MCF 10A (cell line): ENCODE measurements at regions of chr20 and their contacts with region 1.

Region 1: GRCh38 chr20:62616728-62617621 is 25.3 kb upstream of the SLCO4A1 start:
- DNase-seq: peak; percentile 75
- H3K4me3 Mint-ChIP-seq: peak overlapping the region; percentile 3
- H3K27ac Mint-ChIP-seq: no peak overlapping the region
- H3K4me1 Mint-ChIP-seq: peaks cover 2% of the 10 kb centered on the region
- H3K27me3 Mint-ChIP-seq: no peaks in the 10 kb centered on the region
- CTCF ChIP-seq: peak; percentile 98

Region 2: DNA sequence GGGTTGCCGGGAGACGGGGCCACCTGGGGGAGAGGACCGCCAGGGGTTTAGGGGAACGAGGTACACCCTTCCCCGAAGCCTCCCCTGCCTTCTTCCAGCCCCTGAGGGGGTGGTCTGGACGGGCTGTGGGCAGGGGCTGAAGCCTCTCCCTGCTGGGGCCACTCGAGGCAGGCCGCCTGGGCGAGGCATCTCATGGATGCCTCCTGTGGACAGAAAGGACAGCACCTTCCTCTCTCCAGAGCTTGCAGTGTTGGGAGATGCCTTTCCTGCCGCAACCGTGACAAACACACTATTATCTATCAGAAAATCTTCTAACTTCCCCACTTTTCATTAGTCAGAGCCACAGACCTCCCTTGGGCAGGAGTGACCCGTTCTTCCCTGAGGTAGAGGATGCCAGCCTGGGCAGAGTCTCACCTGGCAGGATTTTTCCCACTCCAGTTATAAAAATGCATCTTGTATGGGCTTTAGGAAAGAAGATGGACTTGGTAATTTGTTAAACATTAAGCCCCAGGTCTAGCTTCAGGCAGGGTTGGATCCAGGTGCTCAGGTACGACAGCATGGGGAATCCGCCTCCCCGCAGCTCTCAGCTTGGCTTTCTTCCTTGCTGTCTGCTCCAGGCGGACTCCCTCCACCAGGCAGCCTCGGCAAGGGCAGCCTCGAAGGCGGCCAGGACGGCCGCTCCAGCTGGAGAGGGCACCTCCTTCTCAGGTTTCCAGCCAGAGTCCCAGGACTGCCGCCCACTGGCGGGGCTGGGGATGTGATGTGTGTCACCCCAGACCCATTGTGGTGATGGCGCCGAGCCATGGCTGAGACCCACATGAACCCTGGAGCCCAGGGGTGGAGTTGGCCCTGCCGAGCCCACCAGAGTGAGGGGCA is 407.9 kb before region 1 on chr20:
- CTCF ChIA-PET with region 1: no interaction called
- POLR2A ChIA-PET with region 1: no interaction called
- intact Hi-C with region 1: no loop called
- DNase-seq: peak; percentile 42
- H3K4me3 Mint-ChIP-seq: no peak overlapping the region
- H3K27ac Mint-ChIP-seq: no peak overlapping the region
- H3K4me1 Mint-ChIP-seq: no peaks in the 10 kb centered on the region
- H3K27me3 Mint-ChIP-seq: peaks cover 5% of the 10 kb centered on the region
- CTCF ChIP-seq: peak; percentile 9

Region 3: DNA sequence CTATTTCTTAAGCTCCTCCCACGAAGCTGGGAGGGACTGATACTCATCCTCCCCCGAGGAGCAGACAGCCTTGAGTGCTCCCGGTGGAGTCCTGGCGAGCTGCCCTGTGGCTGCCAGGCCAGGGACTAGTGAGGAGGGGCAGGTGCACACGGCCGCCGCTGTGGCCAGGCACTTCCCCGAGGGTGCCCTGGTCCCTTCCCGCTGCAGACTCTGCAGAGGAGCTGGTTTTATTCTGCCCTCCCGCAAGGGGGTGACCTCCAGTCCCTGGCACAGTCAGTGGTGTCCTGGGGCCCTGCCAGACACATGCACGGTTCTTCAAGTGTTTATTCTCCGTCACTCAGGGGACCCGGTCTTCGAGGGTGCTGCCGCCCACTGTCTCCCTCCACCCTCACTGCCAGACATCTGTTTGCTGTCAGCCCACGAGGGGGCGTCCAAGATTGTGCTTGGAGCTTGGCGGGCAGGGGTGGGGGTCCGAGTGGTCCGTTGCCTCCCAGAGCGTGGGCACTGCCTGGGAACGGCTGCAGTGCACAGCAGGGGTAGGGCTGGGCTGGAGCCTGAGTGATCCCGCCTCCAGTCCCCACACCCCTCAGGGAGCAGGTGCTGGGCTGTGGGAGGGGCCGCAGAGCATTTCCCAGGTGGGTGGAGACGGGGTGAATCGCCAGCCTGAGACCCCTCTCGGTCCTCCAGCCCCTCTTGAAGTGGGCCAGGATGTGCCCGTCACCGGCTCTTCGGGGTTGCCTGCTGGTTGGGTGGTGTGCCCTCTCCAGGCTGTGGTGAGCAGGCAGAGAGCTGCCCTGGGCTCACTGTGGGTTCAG is 206.8 kb before region 1 on chr20:
- CTCF ChIA-PET with region 1: interaction called, 17 read pairs
- POLR2A ChIA-PET with region 1: no interaction called
- intact Hi-C with region 1: no loop called
- DNase-seq: peak; percentile 36
- H3K4me3 Mint-ChIP-seq: no peak overlapping the region
- H3K27ac Mint-ChIP-seq: no peak overlapping the region
- H3K4me1 Mint-ChIP-seq: peaks cover 17% of the 10 kb centered on the region
- H3K27me3 Mint-ChIP-seq: no peaks in the 10 kb centered on the region
- CTCF ChIP-seq: no peak

Region 4: DNA sequence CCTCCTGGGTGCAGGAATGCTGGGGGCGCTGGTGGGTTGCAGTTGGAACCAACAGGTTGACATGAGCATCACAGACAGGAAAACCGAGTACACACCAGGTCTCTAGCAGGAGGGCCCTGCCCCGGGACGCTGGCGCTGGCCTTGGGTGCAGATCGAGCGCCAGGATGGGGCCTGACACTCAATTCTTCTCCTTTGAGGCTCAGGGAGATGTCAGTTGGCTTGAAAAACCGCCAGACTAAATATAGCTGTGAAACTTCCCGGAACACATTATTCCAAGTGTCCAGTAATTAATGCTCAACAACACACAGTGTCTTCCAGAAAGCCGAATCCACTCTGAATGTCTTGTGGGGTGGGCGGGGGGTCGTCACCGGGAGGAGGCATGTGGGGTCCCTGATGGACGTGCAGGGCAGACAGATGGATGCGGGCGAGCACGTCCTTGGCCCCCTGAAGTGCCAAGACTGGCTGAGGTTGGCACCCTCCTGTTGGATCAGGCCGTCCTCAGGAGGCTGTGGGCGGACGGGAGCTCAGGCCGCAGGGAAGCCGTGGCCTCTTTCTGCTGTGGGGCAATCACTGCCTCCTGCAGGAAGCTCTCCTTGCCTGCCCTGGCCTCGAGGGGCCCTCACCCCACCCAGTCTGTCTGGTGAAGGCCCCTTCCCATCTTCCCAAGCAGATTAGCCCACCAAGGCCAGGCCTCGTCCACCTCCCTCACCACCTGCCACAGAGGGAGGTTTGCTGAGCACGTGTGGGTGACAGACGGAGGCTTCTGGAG is 121.8 kb before region 1 on chr20:
- CTCF ChIA-PET with region 1: interaction called, 63 read pairs
- POLR2A ChIA-PET with region 1: interaction called, 3 read pairs
- intact Hi-C with region 1: loop called (anchors 1 kb)
- DNase-seq: no peak
- H3K4me3 Mint-ChIP-seq: no peak overlapping the region
- H3K27ac Mint-ChIP-seq: no peak overlapping the region
- H3K4me1 Mint-ChIP-seq: peaks cover under 1% of the 10 kb centered on the region
- H3K27me3 Mint-ChIP-seq: no peaks in the 10 kb centered on the region
- CTCF ChIP-seq: no peak

Region 5: GRCh38 chr20:62516345-62516744 is 100.6 kb before region 1 on chr20:
- CTCF ChIA-PET with region 1: interaction called, 3 read pairs
- POLR2A ChIA-PET with region 1: no interaction called
- intact Hi-C with region 1: loop called (anchors 5 kb)
- DNase-seq: peak; percentile 40
- H3K4me3 Mint-ChIP-seq: no peak overlapping the region
- H3K27ac Mint-ChIP-seq: no peak overlapping the region
- H3K4me1 Mint-ChIP-seq: no peaks in the 10 kb centered on the region
- H3K27me3 Mint-ChIP-seq: peaks cover 16% of the 10 kb centered on the region
- CTCF ChIP-seq: peak; percentile 23

Region 6: DNA sequence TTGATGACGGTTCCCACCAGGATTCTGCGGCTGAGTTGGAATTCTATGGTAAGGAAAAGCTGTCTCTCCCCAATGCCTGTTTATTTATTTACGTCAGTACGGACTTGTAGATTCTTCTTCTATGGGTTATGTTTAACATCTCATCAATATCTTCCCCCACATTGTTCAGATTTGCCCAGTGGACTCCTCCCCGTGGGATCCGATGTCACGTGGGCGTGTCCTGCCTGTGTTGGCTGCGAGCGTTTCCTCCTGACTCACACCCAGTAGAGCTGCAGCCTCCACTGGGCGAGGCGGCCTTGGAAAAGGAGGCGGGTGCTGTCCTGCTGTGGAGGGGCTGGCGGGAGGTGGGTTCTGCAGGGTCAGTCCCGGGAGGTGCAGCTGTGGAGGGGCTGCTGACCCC is 21.5 kb before region 1 on chr20:
- CTCF ChIA-PET with region 1: interaction called, 16 read pairs
- POLR2A ChIA-PET with region 1: interaction called, 19 read pairs
- intact Hi-C with region 1: no loop called
- DNase-seq: peak; percentile 72
- H3K4me3 Mint-ChIP-seq: no peak overlapping the region
- H3K27ac Mint-ChIP-seq: no peak overlapping the region
- H3K4me1 Mint-ChIP-seq: peaks cover 34% of the 10 kb centered on the region
- H3K27me3 Mint-ChIP-seq: no peaks in the 10 kb centered on the region
- CTCF ChIP-seq: no peak

Region 7: DNA sequence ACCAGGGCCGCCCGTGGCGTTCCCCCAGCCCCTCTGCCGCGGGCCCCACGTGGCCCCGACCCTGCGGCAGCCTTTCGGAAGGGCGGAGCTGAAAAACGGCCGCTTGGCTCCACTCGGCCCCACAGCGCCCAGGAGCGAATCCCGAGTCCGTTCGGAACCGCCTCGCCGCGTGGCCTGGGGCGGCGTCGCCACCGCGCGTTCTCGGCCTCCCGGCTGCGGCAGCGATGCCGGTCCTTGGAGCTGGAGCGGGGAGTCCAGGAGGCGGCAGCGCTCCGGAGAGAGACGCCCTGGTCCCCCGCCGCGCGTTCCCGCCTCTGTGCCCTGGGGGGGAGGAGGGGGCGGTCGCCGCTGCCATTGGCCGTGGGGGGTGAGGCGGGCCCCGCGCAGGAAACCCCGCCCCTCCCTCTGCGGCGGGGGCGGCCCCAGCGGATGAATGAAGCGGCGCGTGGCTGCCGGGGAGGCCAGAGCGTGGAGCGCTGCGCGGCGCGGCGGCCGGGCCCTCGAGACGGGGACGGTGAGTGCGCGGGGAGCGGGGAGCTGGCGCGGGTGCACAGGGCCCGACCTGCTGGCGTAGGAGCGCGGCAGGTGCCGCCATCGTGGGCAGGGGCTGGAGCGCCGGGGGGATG is 25.2 kb after region 1 on chr20 and contains the start of gene SLCO4A1:
- CTCF ChIA-PET with region 1: interaction called, 13 read pairs
- POLR2A ChIA-PET with region 1: interaction called, 100 read pairs
- intact Hi-C with region 1: no loop called
- DNase-seq: peak; percentile 80
- H3K4me3 Mint-ChIP-seq: peak within 1 kb of the TSS; percentile 72
- H3K27ac Mint-ChIP-seq: no peak within 1 kb of the TSS
- H3K4me1 Mint-ChIP-seq: peaks cover 7% of the 10 kb centered on the region
- H3K27me3 Mint-ChIP-seq: no peaks in the 10 kb centered on the region
- CTCF ChIP-seq: no peak
- total RNA-seq, gene SLCO4A1: 23.8 and 27.0 TPM in 2 replicates